ENCODE measurements at regions of chr2 and their contacts with region 1.

Region 1: GRCh38 chr2:53913721-53914120 is 54.0 kb upstream of the GPR75 start:
- DNase-seq: peak in 5 of 14 experiments; percentile 11 to 42 (median 13)
- ATAC-seq: peak; percentile 76
- H3K4me3 ChIP-seq: no peak overlapping the region
- H3K4me3 Mint-ChIP-seq: no peak overlapping the region
- H3K27ac ChIP-seq: no peak overlapping the region
- H3K27ac Mint-ChIP-seq: peak overlapping the region; percentile 43
- H3K4me1 ChIP-seq: no peaks in the 10 kb centered on the region
- H3K4me1 Mint-ChIP-seq: peaks cover 9% of the 10 kb centered on the region
- H3K27me3 ChIP-seq: no peaks in the 10 kb centered on the region
- H3K27me3 Mint-ChIP-seq: no peaks in the 10 kb centered on the region
- CTCF ChIP-seq: no peak

Region 2: GRCh38 chr2:53848062-53848461 is 65.7 kb before region 1 on chr2:
- CTCF ChIA-PET with region 1: no interaction called
- POLR2A ChIA-PET with region 1: no interaction called
- intact Hi-C with region 1: no loop called
- DNase-seq: no peak
- ATAC-seq: no peak
- H3K4me3 ChIP-seq: no peak overlapping the region
- H3K4me3 Mint-ChIP-seq: no peak overlapping the region
- H3K27ac ChIP-seq: no peak overlapping the region
- H3K27ac Mint-ChIP-seq: no peak overlapping the region
- H3K4me1 ChIP-seq: no peaks in the 10 kb centered on the region
- H3K4me1 Mint-ChIP-seq: peaks cover 3% of the 10 kb centered on the region
- H3K27me3 ChIP-seq: no peaks in the 10 kb centered on the region
- H3K27me3 Mint-ChIP-seq: no peaks in the 10 kb centered on the region
- CTCF ChIP-seq: no peak

Region 3: DNA sequence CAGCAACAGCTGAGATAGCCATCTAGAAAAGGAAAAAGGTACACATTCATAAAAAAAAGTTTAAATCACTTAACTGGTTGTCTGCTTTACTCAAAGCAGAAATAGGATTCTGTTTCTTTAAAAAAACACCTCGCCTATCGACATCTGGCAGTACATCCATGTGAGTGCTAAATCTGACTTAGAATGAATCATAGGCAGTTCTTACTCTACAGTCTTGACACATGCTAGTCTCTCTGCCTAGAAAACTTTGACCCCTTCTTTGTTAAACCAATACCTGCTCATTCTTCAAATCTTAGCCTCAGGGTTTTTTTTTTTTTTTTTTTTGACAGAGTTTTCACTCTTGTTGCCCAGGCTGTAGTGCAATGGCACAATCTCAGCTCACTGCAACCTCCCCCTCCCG is 16.9 kb before region 1 on chr2:
- CTCF ChIA-PET with region 1: no interaction called
- POLR2A ChIA-PET with region 1: interaction called, 3 read pairs
- intact Hi-C with region 1: loop called in 1 of 2 experiments (anchors 1 kb)
- DNase-seq: no peak
- ATAC-seq: no peak
- H3K4me3 ChIP-seq: no peak overlapping the region
- H3K4me3 Mint-ChIP-seq: no peak overlapping the region
- H3K27ac ChIP-seq: no peak overlapping the region
- H3K27ac Mint-ChIP-seq: no peak overlapping the region
- H3K4me1 ChIP-seq: no peaks in the 10 kb centered on the region
- H3K4me1 Mint-ChIP-seq: no peaks in the 10 kb centered on the region
- H3K27me3 ChIP-seq: no peaks in the 10 kb centered on the region
- H3K27me3 Mint-ChIP-seq: no peaks in the 10 kb centered on the region
- CTCF ChIP-seq: no peak

Region 4: DNA sequence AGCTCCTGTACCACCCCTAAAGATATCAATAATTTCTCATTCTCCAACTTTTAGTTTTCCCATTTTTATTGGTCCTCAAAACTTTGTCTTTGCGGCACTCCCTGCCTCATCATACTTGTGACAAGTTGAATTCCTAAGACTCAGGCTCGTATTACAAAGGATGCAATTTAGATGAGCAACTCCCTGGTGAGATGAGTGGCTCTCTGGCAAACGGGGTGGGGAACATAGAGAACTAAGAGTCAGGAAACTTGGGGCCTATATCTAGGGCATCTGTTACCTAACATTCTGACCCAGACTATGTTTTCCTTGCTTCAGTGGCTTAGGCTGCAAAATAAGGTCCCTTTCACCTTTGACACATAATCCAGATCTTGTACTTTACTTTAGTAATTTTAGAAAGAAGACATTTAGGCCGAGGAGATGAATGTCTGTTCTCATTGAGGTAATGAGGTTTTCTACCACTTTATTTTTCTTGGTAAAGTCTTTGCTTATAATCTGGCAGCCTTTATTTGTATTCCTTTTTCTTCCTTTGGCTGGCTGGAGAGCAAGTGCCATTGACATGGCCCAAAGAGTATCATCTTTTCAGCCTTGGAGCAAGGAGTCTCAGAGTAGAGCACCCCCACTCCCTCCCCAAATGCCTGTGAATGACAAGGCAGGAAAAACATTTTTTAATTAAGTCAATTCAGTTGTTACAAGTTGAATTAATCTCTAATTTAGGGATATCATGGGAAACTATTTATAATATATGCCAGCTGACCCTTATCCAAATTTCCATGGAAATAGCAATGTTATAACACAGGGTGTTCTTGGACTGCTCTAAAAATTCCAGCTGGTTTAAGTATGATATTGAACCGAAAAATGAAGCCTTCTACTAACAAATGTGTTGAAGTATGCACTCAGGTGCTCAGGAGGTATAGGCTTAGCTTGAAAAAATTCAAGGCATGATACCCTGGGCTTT is 327.1 kb after region 1 on chr2:
- CTCF ChIA-PET with region 1: no interaction called
- POLR2A ChIA-PET with region 1: no interaction called
- intact Hi-C with region 1: no loop called
- DNase-seq: no peak
- ATAC-seq: no peak
- H3K4me3 ChIP-seq: no peak overlapping the region
- H3K4me3 Mint-ChIP-seq: no peak overlapping the region
- H3K27ac ChIP-seq: no peak overlapping the region
- H3K27ac Mint-ChIP-seq: no peak overlapping the region
- H3K4me1 ChIP-seq: no peaks in the 10 kb centered on the region
- H3K4me1 Mint-ChIP-seq: no peaks in the 10 kb centered on the region
- H3K27me3 ChIP-seq: no peaks in the 10 kb centered on the region
- H3K27me3 Mint-ChIP-seq: no peaks in the 10 kb centered on the region
- CTCF ChIP-seq: no peak

Region 5: GRCh38 chr2:54545702-54546450 is 632.2 kb after region 1 on chr2:
- CTCF ChIA-PET with region 1: no interaction called
- POLR2A ChIA-PET with region 1: no interaction called
- intact Hi-C with region 1: no loop called
- DNase-seq: no peak
- ATAC-seq: no peak
- H3K4me3 ChIP-seq: no peak overlapping the region
- H3K4me3 Mint-ChIP-seq: no peak overlapping the region
- H3K27ac ChIP-seq: no peak overlapping the region
- H3K27ac Mint-ChIP-seq: no peak overlapping the region
- H3K4me1 ChIP-seq: no peaks in the 10 kb centered on the region
- H3K4me1 Mint-ChIP-seq: no peaks in the 10 kb centered on the region
- H3K27me3 ChIP-seq: no peaks in the 10 kb centered on the region
- H3K27me3 Mint-ChIP-seq: no peaks in the 10 kb centered on the region
- CTCF ChIP-seq: no peak

Region 6: GRCh38 chr2:55425431-55425831 is 1511.7 kb after region 1 on chr2:
- CTCF ChIA-PET with region 1: no interaction called
- POLR2A ChIA-PET with region 1: no interaction called
- intact Hi-C with region 1: loop called in 1 of 2 experiments (anchors 5 kb)
- DNase-seq: peak in 2 of 14 experiments; percentile 19 to 34
- ATAC-seq: no peak
- H3K4me3 ChIP-seq: no peak overlapping the region
- H3K4me3 Mint-ChIP-seq: no peak overlapping the region
- H3K27ac ChIP-seq: no peak overlapping the region
- H3K27ac Mint-ChIP-seq: no peak overlapping the region
- H3K4me1 ChIP-seq: peaks cover 5% of the 10 kb centered on the region
- H3K4me1 Mint-ChIP-seq: peaks cover 9% of the 10 kb centered on the region
- H3K27me3 ChIP-seq: peaks cover 0 to 3% of the 10 kb centered on the region in 2 experiments
- H3K27me3 Mint-ChIP-seq: peaks cover 12% of the 10 kb centered on the region
- CTCF ChIP-seq: no peak